ENCODE measurements at regions of chr9 and their contacts with region 1.

Region 1: GRCh38 chr9:36728651-36729520 is 156.2 kb downstream of the MELK start:
- DNase-seq: peak; percentile 73
- ATAC-seq: peak; percentile 74
- H3K4me3 Mint-ChIP-seq: no peak overlapping the region
- H3K27ac Mint-ChIP-seq: no peak overlapping the region
- H3K4me1 Mint-ChIP-seq: no peaks in the 10 kb centered on the region
- H3K27me3 Mint-ChIP-seq: no peaks in the 10 kb centered on the region

Region 2: GRCh38 chr9:36597412-36598178 is 131.3 kb before region 1 on chr9:
- CTCF ChIA-PET with region 1: interaction called, 10 read pairs
- POLR2A ChIA-PET with region 1: no interaction called
- DNase-seq: no peak
- ATAC-seq: no peak
- H3K4me3 Mint-ChIP-seq: no peak overlapping the region
- H3K27ac Mint-ChIP-seq: no peak overlapping the region
- H3K4me1 Mint-ChIP-seq: peaks cover 4% of the 10 kb centered on the region
- H3K27me3 Mint-ChIP-seq: no peaks in the 10 kb centered on the region

Region 3: GRCh38 chr9:36625006-36625615 is 103.8 kb before region 1 on chr9:
- CTCF ChIA-PET with region 1: interaction called, 12 read pairs
- POLR2A ChIA-PET with region 1: no interaction called
- DNase-seq: no peak
- ATAC-seq: no peak
- H3K4me3 Mint-ChIP-seq: no peak overlapping the region
- H3K27ac Mint-ChIP-seq: no peak overlapping the region
- H3K4me1 Mint-ChIP-seq: no peaks in the 10 kb centered on the region
- H3K27me3 Mint-ChIP-seq: no peaks in the 10 kb centered on the region

Region 4: DNA sequence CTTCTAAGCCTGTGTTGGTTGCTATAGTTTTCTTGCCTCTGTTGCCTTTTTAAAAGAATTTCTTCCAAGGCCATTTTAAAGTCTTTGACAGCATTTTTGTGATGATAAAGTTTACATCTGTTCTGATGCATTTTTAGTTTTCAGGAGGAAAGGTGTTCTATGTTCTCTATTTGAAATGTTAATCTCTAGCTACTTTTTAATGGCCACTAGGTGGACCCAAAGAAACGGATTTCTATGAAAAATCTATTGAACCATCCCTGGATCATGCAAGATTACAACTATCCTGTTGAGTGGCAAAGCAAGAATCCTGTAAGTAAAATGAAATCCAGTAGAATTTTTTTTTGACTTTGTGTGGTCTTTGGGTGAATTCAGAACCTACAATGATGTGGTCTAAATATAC is 96.0 kb before region 1 on chr9:
- CTCF ChIA-PET with region 1: interaction called, 36 read pairs
- POLR2A ChIA-PET with region 1: no interaction called
- DNase-seq: no peak
- ATAC-seq: no peak
- H3K4me3 Mint-ChIP-seq: no peak overlapping the region
- H3K27ac Mint-ChIP-seq: no peak overlapping the region
- H3K4me1 Mint-ChIP-seq: no peaks in the 10 kb centered on the region
- H3K27me3 Mint-ChIP-seq: no peaks in the 10 kb centered on the region

Region 5: GRCh38 chr9:36656842-36657241 is 72.0 kb before region 1 on chr9:
- CTCF ChIA-PET with region 1: no interaction called
- POLR2A ChIA-PET with region 1: no interaction called
- DNase-seq: no peak
- ATAC-seq: no peak
- H3K4me3 Mint-ChIP-seq: no peak overlapping the region
- H3K27ac Mint-ChIP-seq: no peak overlapping the region
- H3K4me1 Mint-ChIP-seq: no peaks in the 10 kb centered on the region
- H3K27me3 Mint-ChIP-seq: no peaks in the 10 kb centered on the region

Region 6: DNA sequence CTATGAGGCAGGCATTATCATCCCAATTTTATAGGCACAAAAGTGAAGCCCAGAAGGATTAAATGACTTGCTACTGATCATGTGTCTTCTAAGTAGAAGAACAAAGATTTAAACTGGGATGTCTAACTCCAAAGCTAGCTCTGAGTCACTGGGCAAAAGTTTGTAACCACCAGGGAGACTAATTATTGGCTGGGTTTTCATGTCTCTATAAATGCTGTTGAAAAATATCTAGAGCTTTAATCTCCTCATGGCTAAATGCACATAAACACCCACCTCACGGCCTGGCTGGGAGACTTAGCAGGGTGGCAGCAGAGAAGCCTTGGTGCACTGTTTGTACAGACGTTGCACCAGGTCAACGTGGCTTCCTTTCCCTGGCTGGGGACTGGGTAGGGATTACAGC is 11.6 kb before region 1 on chr9:
- CTCF ChIA-PET with region 1: interaction called, 12 read pairs
- POLR2A ChIA-PET with region 1: no interaction called
- DNase-seq: no peak
- ATAC-seq: no peak
- H3K4me3 Mint-ChIP-seq: no peak overlapping the region
- H3K27ac Mint-ChIP-seq: no peak overlapping the region
- H3K4me1 Mint-ChIP-seq: no peaks in the 10 kb centered on the region
- H3K27me3 Mint-ChIP-seq: peaks cover 11% of the 10 kb centered on the region

Measured in activated CD8-positive, alpha-beta T cell treated with anti-CD3 and anti-CD28 coated beads, Interleukin-2, amount 10 ng/mL, durations not matched to agents 7 days and 5 days (primary cell).